HCT116 (cell line): ENCODE measurements at regions of chr1 and their contacts with region 1.

Region 1: GRCh38 chr1:153903841-153904455 is 18.8 kb downstream of the GATAD2B start:
- DNase-seq: no peak
- ATAC-seq: no peak
- H3K4me3 ChIP-seq: no peak overlapping the region
- H3K27ac ChIP-seq: no peak overlapping the region
- H3K4me1 ChIP-seq: peaks cover 0 to 22% of the 10 kb centered on the region in 2 experiments; a peak in 3 of 4 replicates
- H3K27me3 ChIP-seq: no peaks in the 10 kb centered on the region
- CTCF ChIP-seq: no peak
- POLR2A ChIP-seq: no peak
- RAD21 ChIP-seq: no peak

Region 2: DNA sequence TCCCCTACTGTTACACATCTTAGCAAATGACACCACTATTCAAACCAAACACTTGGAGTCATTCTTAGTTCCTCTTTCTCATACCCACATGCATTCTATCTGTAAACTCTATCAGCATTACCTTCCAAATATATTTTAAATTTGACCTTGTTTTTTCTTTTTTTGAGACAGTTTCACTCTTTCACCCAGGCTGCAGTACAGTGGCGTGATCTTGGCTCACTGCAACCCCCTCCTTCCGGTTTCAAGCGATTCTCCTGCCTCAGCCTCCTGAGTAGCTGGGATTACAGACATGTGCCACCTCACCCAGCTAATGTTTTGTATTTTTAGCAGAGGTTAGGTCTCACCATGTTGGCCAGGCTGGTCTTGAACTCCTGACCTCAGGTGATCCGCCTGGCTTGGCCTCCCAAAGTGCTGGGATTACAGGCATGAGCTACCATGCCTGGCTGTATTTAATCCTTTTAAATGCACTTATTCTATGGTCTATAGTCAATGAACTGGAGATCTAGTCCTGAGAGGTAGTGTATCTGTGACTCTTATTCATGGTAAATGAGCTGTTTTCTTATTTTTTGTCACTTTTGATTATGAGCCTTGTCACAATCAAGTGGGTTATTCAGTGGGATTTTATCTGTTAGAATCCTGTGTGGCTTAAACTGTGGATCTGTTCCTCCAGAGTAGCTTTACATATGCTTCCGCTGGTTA is 54.3 kb before region 1 on chr1:
- CTCF ChIA-PET with region 1: no interaction called
- POLR2A ChIA-PET with region 1: no interaction called
- RAD21 ChIA-PET with region 1: no interaction called
- intact Hi-C with region 1: loop called (anchors 10 kb)
- DNase-seq: no peak
- ATAC-seq: no peak
- H3K4me3 ChIP-seq: no peak overlapping the region
- H3K27ac ChIP-seq: no peak overlapping the region
- H3K4me1 ChIP-seq: no peaks in the 10 kb centered on the region
- H3K27me3 ChIP-seq: no peaks in the 10 kb centered on the region
- CTCF ChIP-seq: no peak
- POLR2A ChIP-seq: no peak
- RAD21 ChIP-seq: no peak